K562 (cell line): ENCODE measurements at regions of chr3 and their contacts with region 1.

Region 1: DNA sequence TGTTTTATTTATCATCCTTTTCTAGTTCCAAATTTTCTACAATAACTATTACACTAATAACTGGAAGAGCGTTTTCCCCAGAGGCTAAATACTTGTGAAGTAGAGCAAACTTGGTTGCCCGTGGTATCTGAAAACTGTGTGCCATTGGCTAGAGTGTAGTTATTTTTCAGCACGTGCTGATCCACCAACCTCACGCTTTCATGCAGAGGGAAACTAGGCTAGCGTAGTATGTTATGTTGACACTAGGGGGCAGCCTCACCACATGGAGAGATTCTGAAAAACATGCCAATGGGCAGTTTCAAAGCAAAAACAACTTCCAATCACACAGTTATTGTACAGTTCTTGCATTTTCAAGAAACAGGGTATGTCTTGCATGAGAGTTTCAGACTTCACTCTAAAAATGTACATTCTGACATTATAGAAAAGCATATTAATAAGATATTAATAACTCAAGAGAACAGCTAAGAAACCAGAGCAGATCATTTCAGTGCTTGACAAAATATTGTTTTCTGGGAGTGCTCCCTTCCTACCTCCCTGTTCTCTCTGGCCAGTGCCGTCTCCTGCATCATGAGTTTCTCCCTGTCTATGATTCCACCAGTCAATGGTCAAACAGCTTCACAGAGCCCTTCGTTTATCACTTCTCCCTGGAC is 39.7 kb downstream of the SPATA12 start:
- DNase-seq: peak; percentile 54 to 73 (median 58)
- ATAC-seq: peak; percentile 87
- H3K4me3 ChIP-seq: no peak overlapping the region
- H3K27ac ChIP-seq: no peak overlapping the region
- H3K4me1 ChIP-seq: no peaks in the 10 kb centered on the region; a peak in 1 of 5 replicates
- H3K27me3 ChIP-seq: peaks cover 0 to 14% of the 10 kb centered on the region in 2 experiments; a peak in 2 of 5 replicates
- CTCF ChIP-seq: peak; percentile 64 to 74 (median 68)
- EP300 ChIP-seq: no peak
- POLR2A ChIP-seq: no peak
- RAD21 ChIP-seq: peak; percentile 71 to 81

Region 2: GRCh38 chr3:57221883-57222282 is 121.7 kb after region 1 on chr3:
- CTCF ChIA-PET with region 1: interaction called, 3 read pairs
- POLR2A ChIA-PET with region 1: no interaction called
- in situ Hi-C with region 1: no loop called
- intact Hi-C with region 1: loop called (anchors 1 kb)
- DNase-seq: peak in 1 of 4 experiments; percentile 13
- ATAC-seq: no peak
- H3K4me3 ChIP-seq: no peak overlapping the region
- H3K27ac ChIP-seq: no peak overlapping the region
- H3K4me1 ChIP-seq: peaks cover 3 to 5% of the 10 kb centered on the region in 2 experiments; a peak in 3 of 5 replicates
- H3K27me3 ChIP-seq: no peaks in the 10 kb centered on the region
- CTCF ChIP-seq: peak in 1 of 3 experiments; percentile 55; a peak in 3 of 6 replicates
- EP300 ChIP-seq: no peak
- POLR2A ChIP-seq: no peak
- RAD21 ChIP-seq: peak; percentile 40 to 52